Colonic mucosa (tissue), 4 donors: ENCODE measurements at regions of chr12 and their contacts with region 1.

Region 1: GRCh38 chr12:50979369-50980052 is 27.2 kb downstream of the HIGD1C start:
- DNase-seq: no peak
- H3K4me3 ChIP-seq: no peak overlapping the region
- H3K27ac ChIP-seq: no peak overlapping the region
- H3K4me1 ChIP-seq: no peaks in the 10 kb centered on the region
- H3K27me3 ChIP-seq: no peaks in the 10 kb centered on the region
- CTCF ChIP-seq: no peak

Region 2: GRCh38 chr12:50375802-50376201 is 603.7 kb before region 1 on chr12:
- intact Hi-C with region 1: no loop called
- DNase-seq: no peak
- H3K4me3 ChIP-seq: no peak overlapping the region
- H3K27ac ChIP-seq: no peak overlapping the region
- H3K4me1 ChIP-seq: no peaks in the 10 kb centered on the region
- H3K27me3 ChIP-seq: no peaks in the 10 kb centered on the region
- CTCF ChIP-seq: no peak

Region 3: DNA sequence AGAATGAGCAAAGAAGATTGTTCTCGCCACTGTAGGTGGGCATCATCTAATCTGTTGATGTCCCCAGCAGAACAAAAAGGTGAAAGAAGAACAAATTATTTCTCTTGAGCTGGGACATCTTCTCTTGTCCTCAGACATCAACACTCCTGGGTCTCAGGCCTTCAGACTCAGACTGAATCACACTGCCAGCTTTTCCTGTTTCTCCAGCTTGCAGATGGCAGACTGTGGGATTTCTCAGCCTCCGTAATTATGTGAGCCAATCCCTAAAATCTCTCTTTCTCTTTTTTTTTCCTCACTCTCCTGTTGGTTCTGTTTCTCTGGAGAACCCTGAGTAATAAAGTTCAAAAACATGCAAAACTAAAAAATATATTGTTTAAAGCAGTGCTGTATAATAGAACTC is 140.5 kb before region 1 on chr12:
- intact Hi-C with region 1: loop called (anchors 5 kb)
- DNase-seq: no peak
- H3K4me3 ChIP-seq: no peak overlapping the region
- H3K27ac ChIP-seq: no peak overlapping the region
- H3K4me1 ChIP-seq: no peaks in the 10 kb centered on the region
- H3K27me3 ChIP-seq: no peaks in the 10 kb centered on the region
- CTCF ChIP-seq: no peak